Activated naive CD4-positive, alpha-beta T cell treated with anti-CD3 and anti-CD28 coated beads for 36 hours (primary cell): ENCODE measurements at regions of chr1 and their contacts with region 1.

Region 1: GRCh38 chr1:25971066-25971810 is 26.6 kb downstream of the PAFAH2 start:
- DNase-seq: peak; percentile 33
- H3K4me3 Mint-ChIP-seq: no peak overlapping the region
- H3K27ac Mint-ChIP-seq: peak overlapping the region; percentile 89
- H3K4me1 Mint-ChIP-seq: peaks cover 31% of the 10 kb centered on the region
- H3K27me3 Mint-ChIP-seq: no peaks in the 10 kb centered on the region

Region 2: DNA sequence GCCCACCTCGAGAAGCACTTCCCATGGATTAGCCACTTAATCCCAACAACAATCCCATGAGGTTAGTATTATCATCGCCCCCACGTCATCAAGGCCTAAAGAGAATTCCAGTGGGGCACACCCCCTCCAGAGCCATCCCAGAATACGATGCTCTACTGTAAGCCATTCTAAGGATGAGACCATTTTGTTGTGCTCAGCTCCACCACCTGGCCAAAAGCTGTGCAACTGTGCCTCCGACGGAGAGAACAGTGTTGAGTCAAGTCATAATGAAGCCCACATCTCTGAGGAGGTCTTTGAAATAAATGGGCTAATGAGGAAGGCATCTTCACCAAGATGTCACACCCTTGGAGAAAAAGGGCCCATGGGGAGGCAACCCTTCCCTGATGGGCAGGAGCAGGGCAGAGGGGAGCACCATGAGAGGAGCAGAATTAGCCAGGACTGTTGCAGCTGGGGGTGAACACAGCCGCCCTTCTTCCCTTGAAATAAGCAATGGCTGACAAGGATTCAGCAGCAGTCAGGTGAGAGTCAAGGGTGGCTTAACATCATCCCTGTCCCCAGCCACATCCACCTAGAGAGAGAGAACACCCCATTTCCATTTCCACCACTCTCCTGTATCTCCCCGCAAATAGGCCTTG is 753.5 kb before region 1 on chr1:
- CTCF ChIA-PET with region 1: no interaction called
- intact Hi-C with region 1: no loop called
- DNase-seq: no peak
- H3K4me3 Mint-ChIP-seq: no peak overlapping the region
- H3K27ac Mint-ChIP-seq: no peak overlapping the region
- H3K4me1 Mint-ChIP-seq: peaks cover 4% of the 10 kb centered on the region
- H3K27me3 Mint-ChIP-seq: no peaks in the 10 kb centered on the region

Region 3: DNA sequence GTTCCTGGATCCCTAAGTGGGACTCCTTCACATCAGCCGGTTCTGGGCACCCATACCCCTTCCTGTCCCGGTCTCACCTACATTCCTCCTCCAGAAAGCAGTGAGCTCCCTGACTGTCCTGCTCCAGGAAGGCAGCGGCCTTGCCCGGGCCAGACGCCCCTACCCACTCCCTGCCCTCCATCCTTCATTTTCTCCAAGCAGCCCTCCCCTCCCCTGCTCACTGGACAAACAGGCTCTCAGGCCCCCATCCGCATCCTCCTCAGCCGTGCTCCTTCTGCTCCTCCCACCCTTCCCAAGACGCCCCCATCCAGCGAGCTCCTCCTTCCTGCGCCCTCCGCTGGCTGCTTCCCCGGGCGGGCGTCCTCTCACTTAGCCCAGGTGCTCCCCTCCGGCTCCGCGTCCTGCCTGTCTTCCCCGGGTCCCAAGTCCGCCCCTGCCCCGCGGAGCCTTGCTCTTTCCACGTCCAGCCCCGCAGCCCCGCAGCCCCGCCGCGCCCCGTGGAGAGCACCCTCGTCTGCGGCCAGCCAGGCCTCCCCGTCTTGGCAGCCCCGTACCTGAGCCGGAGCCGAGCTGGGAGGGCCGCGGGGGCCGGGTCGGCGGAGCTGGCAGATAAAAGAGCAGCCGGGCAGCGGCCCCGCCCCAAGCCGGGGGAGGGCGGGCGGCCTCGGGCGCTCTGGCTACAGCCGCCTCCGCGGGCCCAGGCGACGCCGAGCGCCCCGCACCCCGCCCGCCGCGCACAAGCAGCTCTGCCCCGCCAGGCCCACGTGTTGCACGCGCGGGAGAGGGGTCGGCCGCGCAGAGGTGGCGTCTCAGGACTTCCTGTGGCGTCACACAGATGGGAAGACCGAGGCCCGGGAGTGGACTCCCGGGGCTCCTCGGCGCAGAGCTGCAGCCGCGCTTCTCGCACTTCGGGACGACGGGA is 96.0 kb before region 1 on chr1 and contains the start of gene PAQR7:
- CTCF ChIA-PET with region 1: no interaction called
- intact Hi-C with region 1: no loop called
- DNase-seq: peak; percentile 58
- H3K4me3 Mint-ChIP-seq: peak within 1 kb of the TSS; percentile 84
- H3K27ac Mint-ChIP-seq: peak within 1 kb of the TSS; percentile 18
- H3K4me1 Mint-ChIP-seq: peaks cover 8% of the 10 kb centered on the region
- H3K27me3 Mint-ChIP-seq: no peaks in the 10 kb centered on the region
- total RNA-seq, gene PAQR7: 2.8 to 3.1 TPM

Region 4: GRCh38 chr1:25990702-25991395 is 19.6 kb after region 1 on chr1:
- CTCF ChIA-PET with region 1: interaction called, 5 read pairs
- intact Hi-C with region 1: loop called (anchors 1 kb)
- DNase-seq: peak; percentile 75
- H3K4me3 Mint-ChIP-seq: peak overlapping the region; percentile 73
- H3K27ac Mint-ChIP-seq: peak overlapping the region; percentile 82
- H3K4me1 Mint-ChIP-seq: peaks cover 51% of the 10 kb centered on the region
- H3K27me3 Mint-ChIP-seq: no peaks in the 10 kb centered on the region

Region 5: DNA sequence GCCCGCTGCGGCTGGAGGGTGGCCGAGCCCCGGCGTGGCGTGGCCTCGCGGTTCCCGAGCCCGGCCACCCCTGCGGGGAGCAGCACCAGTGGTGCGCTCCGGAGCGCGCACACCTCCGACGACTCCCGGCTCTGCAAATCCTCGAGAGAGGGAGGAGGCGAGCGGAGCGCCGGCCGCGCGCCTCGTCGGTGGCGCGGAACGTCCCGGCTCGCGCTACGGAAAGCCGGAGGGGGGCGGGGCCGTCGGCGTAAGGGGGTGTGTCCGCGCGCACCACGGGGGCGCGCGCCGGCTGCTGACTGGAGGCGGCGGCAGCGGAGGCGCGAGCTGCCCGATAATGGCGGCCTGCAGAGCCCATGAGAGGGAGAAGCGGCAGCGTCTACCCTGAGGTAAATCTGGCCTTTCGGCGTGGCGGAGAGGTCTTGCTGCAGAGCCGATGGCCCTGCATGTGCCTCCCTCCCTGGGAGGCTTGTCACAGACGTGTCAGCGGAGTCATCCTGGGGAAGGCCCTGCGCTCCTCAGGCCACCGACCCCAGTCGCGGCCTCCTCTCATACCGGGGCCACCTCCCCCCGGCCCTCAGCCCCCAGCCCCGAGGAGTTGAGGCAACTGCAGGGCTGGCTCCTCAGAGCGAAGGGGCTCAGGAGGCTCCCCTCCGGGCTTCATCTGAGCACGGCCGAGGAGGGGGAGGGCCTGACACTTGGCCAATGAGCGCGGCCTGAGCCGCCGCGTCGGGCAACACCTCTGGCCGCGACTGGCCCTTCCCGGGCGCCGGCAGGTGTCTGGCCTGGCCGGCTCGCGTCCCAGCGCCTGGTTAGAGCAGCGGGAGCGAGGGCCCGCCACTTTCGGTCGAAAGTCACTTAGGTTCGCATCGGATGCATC is 140.5 kb after region 1 on chr1 and contains the start of gene PDIK1L:
- CTCF ChIA-PET with region 1: no interaction called
- intact Hi-C with region 1: no loop called
- DNase-seq: peak; percentile 94
- H3K4me3 Mint-ChIP-seq: peak within 1 kb of the TSS; percentile 96
- H3K27ac Mint-ChIP-seq: peak within 1 kb of the TSS; percentile 90
- H3K4me1 Mint-ChIP-seq: peaks cover 28% of the 10 kb centered on the region
- H3K27me3 Mint-ChIP-seq: no peaks in the 10 kb centered on the region
- total RNA-seq, gene PDIK1L: 20.5 to 21.4 TPM